ENCODE measurements at regions of chrX and their contacts with region 1.

Region 1: DNA sequence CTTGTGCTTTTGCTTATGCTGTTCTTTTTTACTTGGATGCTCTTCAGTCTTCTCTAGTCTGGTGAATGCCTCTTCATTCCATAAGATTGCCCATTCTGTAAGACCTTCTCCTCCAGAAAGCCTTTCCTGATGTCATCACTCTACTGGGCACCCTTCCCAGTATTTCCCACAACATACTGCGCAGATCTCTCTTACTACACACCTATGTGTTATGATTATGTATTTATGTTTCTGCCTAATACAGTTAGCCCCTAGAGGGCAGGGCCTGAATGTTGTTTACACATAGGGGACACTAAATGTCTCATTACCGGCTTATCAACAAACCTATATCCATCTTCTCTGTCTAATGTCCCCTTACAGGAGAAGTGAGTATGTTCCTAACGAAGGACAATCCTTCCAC is 21.1 kb downstream of the AIFM1 start:
- DNase-seq: no peak
- ATAC-seq: no peak
- H3K4me3 ChIP-seq: no peak overlapping the region
- H3K4me3 Mint-ChIP-seq: no peak overlapping the region
- H3K27ac ChIP-seq: no peak overlapping the region
- H3K27ac Mint-ChIP-seq: no peak overlapping the region
- H3K4me1 ChIP-seq: no peaks in the 10 kb centered on the region
- H3K4me1 Mint-ChIP-seq: no peaks in the 10 kb centered on the region
- H3K27me3 ChIP-seq: no peaks in the 10 kb centered on the region
- H3K27me3 Mint-ChIP-seq: no peaks in the 10 kb centered on the region
- CTCF ChIP-seq: peak; percentile 10

Region 2: DNA sequence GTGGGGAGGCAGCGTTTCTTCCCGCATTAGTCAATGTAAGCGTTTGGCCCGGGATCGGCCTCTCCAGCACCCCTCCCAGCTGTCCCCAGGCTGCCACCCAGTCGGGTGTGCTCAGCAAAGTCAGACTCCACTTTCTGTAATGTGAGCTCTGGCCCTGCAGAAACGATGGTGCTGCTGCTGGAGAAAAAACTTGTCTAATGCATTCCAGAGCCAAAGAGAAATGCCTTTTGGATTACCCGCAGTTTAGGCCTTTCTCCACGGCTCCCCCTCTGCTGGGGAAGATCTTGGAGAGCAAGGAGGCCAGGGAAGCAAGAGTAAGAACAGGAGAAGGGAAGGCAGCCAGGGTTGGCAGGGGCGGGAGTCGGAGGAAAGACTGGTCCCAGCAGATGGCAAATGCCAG is 89.4 kb before region 1 on chrX:
- CTCF ChIA-PET with region 1: no interaction called
- POLR2A ChIA-PET with region 1: no interaction called
- intact Hi-C with region 1: no loop called
- DNase-seq: no peak
- ATAC-seq: no peak
- H3K4me3 ChIP-seq: no peak overlapping the region
- H3K4me3 Mint-ChIP-seq: no peak overlapping the region
- H3K27ac ChIP-seq: no peak overlapping the region
- H3K27ac Mint-ChIP-seq: no peak overlapping the region
- H3K4me1 ChIP-seq: peaks cover 0 to 5% of the 10 kb centered on the region in 2 donors
- H3K4me1 Mint-ChIP-seq: no peaks in the 10 kb centered on the region
- H3K27me3 ChIP-seq: no peaks in the 10 kb centered on the region
- H3K27me3 Mint-ChIP-seq: no peaks in the 10 kb centered on the region
- CTCF ChIP-seq: no peak

Region 3: GRCh38 chrX:130114141-130114588 is 30.3 kb before region 1 on chrX:
- CTCF ChIA-PET with region 1: no interaction called
- POLR2A ChIA-PET with region 1: no interaction called
- intact Hi-C with region 1: no loop called
- DNase-seq: no peak
- ATAC-seq: no peak
- H3K4me3 ChIP-seq: no peak overlapping the region
- H3K4me3 Mint-ChIP-seq: no peak overlapping the region
- H3K27ac ChIP-seq: no peak overlapping the region
- H3K27ac Mint-ChIP-seq: no peak overlapping the region
- H3K4me1 ChIP-seq: peaks cover 0 to 8% of the 10 kb centered on the region in 2 donors
- H3K4me1 Mint-ChIP-seq: peaks cover 11% of the 10 kb centered on the region
- H3K27me3 ChIP-seq: no peaks in the 10 kb centered on the region
- H3K27me3 Mint-ChIP-seq: no peaks in the 10 kb centered on the region
- CTCF ChIP-seq: no peak

Region 4: GRCh38 chrX:130196466-130196865 is 52.0 kb after region 1 on chrX:
- CTCF ChIA-PET with region 1: interaction called, 7 read pairs
- POLR2A ChIA-PET with region 1: no interaction called
- intact Hi-C with region 1: loop called (anchors 1 kb)
- DNase-seq: no peak
- ATAC-seq: no peak
- H3K4me3 ChIP-seq: no peak overlapping the region
- H3K4me3 Mint-ChIP-seq: no peak overlapping the region
- H3K27ac ChIP-seq: no peak overlapping the region
- H3K27ac Mint-ChIP-seq: no peak overlapping the region
- H3K4me1 ChIP-seq: no peaks in the 10 kb centered on the region
- H3K4me1 Mint-ChIP-seq: peaks cover 9% of the 10 kb centered on the region
- H3K27me3 ChIP-seq: no peaks in the 10 kb centered on the region
- H3K27me3 Mint-ChIP-seq: no peaks in the 10 kb centered on the region
- CTCF ChIP-seq: no peak

Region 5: GRCh38 chrX:132044953-132045352 is 1900.4 kb after region 1 on chrX:
- CTCF ChIA-PET with region 1: no interaction called
- POLR2A ChIA-PET with region 1: no interaction called
- intact Hi-C with region 1: no loop called
- DNase-seq: no peak
- ATAC-seq: no peak
- H3K4me3 ChIP-seq: no peak overlapping the region
- H3K4me3 Mint-ChIP-seq: no peak overlapping the region
- H3K27ac ChIP-seq: no peak overlapping the region
- H3K27ac Mint-ChIP-seq: no peak overlapping the region
- H3K4me1 ChIP-seq: peaks cover 0 to 5% of the 10 kb centered on the region in 2 donors
- H3K4me1 Mint-ChIP-seq: peaks cover 24% of the 10 kb centered on the region
- H3K27me3 ChIP-seq: no peaks in the 10 kb centered on the region
- H3K27me3 Mint-ChIP-seq: no peaks in the 10 kb centered on the region
- CTCF ChIP-seq: no peak

Measured in B cell (primary cell).